ENCODE measurements at regions of chr16 and their contacts with region 1.

Region 1: DNA sequence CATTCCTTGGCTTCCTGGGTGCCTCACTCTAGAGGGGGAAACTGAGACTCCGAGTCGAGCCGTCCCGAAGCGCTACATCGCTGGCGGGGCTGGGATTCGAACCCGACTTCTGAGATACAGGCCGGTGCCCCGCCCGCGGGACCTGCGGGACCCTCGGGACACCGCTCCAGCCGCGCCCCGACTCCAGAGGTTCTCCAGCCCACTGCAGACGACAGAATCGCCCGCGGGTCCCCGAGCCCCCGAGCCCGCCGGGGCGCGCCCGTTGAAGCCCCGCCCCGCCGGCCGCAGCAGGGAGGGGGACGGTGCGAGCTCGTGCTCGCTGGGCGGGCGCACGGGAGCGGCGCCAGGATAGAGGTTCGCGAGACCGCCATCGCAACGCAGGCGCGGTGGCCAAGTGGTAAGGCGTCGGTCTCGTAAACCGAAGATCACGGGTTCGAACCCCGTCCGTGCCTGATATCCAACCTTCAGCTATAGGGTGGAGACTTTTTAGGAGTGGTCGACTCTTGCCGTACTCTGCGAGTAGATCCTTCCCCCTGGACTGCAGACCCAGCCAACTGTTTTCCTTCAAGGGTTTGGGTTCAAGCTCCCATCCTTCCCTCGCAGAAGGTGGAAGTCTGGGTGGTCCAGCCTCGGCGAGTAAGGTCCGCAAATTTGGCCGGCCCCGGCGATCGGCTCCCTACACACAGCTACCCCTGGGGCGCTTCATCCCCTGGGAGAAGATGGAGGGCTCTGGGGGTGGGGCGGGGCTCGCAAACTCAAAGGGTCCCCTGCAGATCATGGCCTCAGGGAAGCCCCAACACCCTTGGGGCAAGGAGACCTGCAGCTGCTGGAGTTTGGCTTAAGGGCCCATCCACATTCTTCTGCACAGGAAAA is 214.6 kb downstream of the MRTFB start:
- DNase-seq: peak; percentile 99
- ATAC-seq: peak; percentile 80
- H3K4me3 Mint-ChIP-seq: peak overlapping the region; percentile 86
- H3K27ac Mint-ChIP-seq: peak overlapping the region; percentile 75
- H3K4me1 Mint-ChIP-seq: peaks cover 7% of the 10 kb centered on the region
- H3K27me3 Mint-ChIP-seq: no peaks in the 10 kb centered on the region

Region 2: DNA sequence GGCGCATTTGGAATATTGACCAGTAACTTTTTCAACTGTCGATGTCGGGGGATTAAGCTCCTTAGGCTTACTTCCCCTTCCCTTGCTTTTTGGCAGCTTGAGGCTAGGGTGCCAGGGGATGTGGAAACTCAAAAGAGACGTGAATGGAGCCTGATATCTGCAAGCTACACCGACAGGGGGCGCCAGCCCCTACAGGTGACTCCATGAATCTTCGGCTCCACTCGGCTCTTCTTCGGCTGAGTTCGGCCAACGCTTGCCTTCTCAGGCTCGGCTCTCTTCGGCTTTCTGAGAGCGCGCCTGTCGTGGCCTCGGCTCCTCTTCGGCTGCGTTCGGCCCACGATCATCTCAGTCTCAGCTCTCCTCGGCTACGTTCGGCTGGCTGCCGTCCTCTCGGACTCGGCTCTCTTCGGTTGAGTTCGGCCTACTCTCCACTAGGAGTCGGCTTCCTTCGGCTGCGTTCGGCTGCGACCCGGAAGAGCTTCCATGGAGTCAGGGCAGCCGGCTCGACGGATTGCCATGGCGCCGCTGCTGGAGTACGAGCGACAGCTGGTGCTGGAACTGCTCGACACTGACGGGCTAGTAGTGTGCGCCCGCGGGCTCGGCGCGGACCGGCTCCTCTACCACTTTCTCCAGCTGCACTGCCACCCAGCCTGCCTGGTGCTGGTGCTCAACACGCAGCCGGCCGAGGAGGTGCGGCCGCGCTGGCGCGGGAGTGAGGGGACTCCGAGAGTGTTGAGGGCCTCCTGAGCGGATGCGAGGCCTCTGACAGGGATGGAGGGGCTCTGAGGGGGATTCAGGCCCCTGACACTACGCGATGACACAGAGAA is 365.9 kb before region 1 on chr16 and contains the start of gene ERCC4:
- POLR2A ChIA-PET with region 1: interaction called, 11 read pairs
- DNase-seq: peak; percentile 98
- ATAC-seq: peak; percentile 99
- H3K4me3 Mint-ChIP-seq: peak within 1 kb of the TSS; percentile 88
- H3K27ac Mint-ChIP-seq: peak within 1 kb of the TSS; percentile 92
- H3K4me1 Mint-ChIP-seq: peaks cover 17% of the 10 kb centered on the region
- H3K27me3 Mint-ChIP-seq: peaks cover 7% of the 10 kb centered on the region
- total RNA-seq, gene ERCC4: 12.6 to 14.8 TPM